ENCODE measurements at regions of chr2 and their contacts with region 1.

Region 1: DNA sequence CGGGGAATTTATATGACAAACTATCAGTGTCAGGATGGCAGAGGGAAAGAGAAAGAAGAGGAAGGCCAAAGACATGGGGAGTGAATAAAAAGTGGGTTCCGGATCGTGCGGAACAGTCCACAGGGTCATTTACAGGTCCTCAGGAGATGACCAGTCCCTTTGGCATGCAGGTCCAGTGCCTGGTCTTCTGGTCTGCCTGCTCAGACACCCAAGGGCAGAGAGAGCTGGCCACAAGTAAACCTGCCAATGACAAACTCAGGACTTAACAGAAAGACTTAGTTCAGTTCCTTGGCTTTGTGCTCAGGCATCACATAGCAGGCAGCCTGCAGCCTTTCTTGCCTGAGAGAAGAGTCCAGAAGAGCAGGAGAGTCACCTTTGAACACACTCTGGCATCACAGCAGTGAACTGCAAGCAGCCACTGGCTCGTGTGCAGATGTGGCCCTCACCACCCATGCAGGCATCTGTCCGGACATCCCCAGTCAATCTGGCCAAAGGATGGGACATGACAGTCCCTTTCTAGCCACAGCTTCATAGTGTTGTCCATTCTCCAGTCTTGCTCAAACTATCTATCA is 14.0 kb downstream of the TMEM127 start:
- DNase-seq: peak; percentile 95 to 99 (median 98)
- H3K4me3 ChIP-seq: peak overlapping the region in 1 of 4 donors; percentile 35
- H3K27ac ChIP-seq: peak overlapping the region; percentile 55 to 95 (median 76)
- H3K4me1 ChIP-seq: peaks cover 27 to 65% of the 10 kb centered on the region in 2 donors
- H3K27me3 ChIP-seq: no peaks in the 10 kb centered on the region
- CTCF ChIP-seq: peak in 1 of 6 experiments; percentile 37
- POLR2A ChIP-seq: peak; percentile 73 to 87

Region 2: GRCh38 chr2:96072746-96073145 is 179.1 kb before region 1 on chr2:
- intact Hi-C with region 1: no loop called
- DNase-seq: no peak
- H3K4me3 ChIP-seq: no peak overlapping the region
- H3K27ac ChIP-seq: no peak overlapping the region
- H3K4me1 ChIP-seq: no peaks in the 10 kb centered on the region
- H3K27me3 ChIP-seq: no peaks in the 10 kb centered on the region
- CTCF ChIP-seq: no peak
- POLR2A ChIP-seq: no peak

Region 3: DNA sequence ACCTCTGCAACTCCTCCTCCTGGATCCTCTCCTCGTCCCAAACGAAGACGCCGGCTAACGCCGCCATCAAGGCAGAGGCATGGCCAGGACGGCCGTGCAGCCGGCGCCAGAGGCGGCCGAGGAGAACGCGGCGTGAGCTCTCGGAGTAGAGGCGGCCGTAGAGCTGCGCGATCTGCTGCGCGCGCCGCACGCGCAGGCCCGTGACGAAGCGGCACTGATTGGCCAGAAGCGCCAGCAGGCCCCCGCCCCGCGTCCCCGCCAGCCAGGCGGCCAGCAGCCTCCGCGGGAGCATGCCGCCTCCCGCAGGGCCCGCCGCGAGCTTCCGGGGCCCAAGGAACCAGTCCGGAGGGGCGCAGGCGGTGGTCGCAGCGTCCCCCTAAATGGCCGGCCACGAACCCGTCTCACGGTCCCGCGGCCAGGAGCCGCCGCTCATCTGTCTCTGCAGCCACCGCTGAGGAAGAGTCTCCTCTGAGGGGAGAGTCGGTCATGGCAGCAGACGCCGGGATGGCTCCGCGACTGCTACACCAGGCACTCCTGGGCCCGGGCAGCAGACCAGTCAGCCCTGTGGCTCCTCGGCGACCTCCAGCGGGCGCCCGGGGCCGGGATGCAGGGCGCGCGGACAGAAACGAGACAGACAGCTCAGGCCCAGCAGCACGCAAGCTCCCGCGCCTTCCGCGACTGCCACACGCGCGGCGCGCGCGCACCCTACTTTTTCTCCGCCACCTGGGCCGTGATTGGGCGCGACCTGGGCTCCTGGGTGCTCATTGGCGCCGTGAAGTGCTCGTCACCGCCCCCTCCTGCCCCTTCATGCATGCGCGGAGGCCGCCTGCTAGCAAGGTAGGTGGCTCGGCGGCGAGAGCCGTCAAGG is 43.4 kb before region 1 on chr2 and contains the start of gene STARD7:
- intact Hi-C with region 1: loop called (anchors 5 to 10 kb)
- DNase-seq: peak; percentile 99 to 100 (median 99)
- H3K4me3 ChIP-seq: peak within 1 kb of the TSS; percentile 35 to 78 (median 70)
- H3K27ac ChIP-seq: peak within 1 kb of the TSS; percentile 89 to 97 (median 97)
- H3K4me1 ChIP-seq: peaks cover 40 to 51% of the 10 kb centered on the region in 2 donors
- H3K27me3 ChIP-seq: no peaks in the 10 kb centered on the region
- CTCF ChIP-seq: peak in 3 of 6 experiments; percentile 11 to 16 (median 13)
- POLR2A ChIP-seq: peak; percentile 90 to 97
- total RNA-seq, gene STARD7: 135 to 209 (median 166) TPM

Region 4: DNA sequence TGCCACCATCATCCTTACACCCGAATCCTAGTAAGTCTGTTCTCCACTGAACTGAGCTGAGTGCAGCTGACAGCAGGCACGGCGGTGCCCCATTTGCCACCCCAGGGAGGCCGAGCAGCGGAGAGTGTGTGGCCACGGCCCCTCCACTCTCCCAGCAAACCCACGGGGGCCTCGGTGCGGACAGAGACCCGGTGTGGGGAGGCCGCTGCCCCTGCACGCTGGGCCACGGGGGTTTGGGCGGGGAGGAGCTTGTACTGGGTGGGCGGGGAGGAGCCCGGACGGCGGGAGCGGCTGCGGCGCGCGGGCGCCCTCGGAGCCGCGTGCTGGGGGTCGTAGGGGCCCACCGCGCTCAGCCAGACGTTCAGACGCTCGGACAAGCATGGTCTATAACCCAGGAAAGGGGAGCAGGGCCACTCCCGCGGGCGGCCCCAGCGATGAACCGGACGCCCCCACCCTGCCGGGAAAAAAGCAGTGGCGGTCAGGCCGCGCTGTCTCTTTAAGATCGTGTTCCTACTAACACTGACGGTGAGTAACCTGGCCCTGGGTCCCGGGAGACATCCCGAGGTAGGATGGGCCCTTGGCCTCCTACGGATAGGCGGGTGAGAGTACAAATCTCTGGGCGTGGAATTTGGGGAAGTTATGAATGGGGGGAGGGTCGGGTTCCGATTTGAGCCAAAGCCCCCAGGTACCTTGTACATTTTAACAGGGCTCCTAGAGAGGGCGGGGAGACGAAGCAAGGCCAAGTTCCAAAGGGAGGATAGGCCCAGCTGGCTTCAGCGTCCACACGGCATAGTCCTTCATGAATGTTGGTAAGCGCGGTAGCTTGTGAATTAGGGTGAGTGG is 73.5 kb after region 1 on chr2 and contains the start of gene ITPRIPL1:
- intact Hi-C with region 1: no loop called
- DNase-seq: peak in 1 of 7 donors; percentile 19
- H3K4me3 ChIP-seq: peak within 1 kb of the TSS in 2 of 4 donors; percentile 18 to 43
- H3K27ac ChIP-seq: no peak within 1 kb of the TSS
- H3K4me1 ChIP-seq: peaks cover 10 to 22% of the 10 kb centered on the region in 2 donors
- H3K27me3 ChIP-seq: peaks cover 13% of the 10 kb centered on the region
- CTCF ChIP-seq: no peak
- POLR2A ChIP-seq: no peak
- total RNA-seq, gene ITPRIPL1: 0.32 to 3.8 (median 1.0) TPM in 8 of 9 donors, not detected in the other

Region 5: GRCh38 chr2:96336104-96336775 is 84.4 kb after region 1 on chr2:
- intact Hi-C with region 1: no loop called
- DNase-seq: no peak
- H3K4me3 ChIP-seq: peak overlapping the region in 1 of 4 donors; percentile 60
- H3K27ac ChIP-seq: peak overlapping the region in 1 of 5 donors; percentile 82
- H3K4me1 ChIP-seq: peaks cover 6 to 8% of the 10 kb centered on the region in 2 donors
- H3K27me3 ChIP-seq: no peaks in the 10 kb centered on the region
- CTCF ChIP-seq: no peak
- POLR2A ChIP-seq: no peak

Region 6: DNA sequence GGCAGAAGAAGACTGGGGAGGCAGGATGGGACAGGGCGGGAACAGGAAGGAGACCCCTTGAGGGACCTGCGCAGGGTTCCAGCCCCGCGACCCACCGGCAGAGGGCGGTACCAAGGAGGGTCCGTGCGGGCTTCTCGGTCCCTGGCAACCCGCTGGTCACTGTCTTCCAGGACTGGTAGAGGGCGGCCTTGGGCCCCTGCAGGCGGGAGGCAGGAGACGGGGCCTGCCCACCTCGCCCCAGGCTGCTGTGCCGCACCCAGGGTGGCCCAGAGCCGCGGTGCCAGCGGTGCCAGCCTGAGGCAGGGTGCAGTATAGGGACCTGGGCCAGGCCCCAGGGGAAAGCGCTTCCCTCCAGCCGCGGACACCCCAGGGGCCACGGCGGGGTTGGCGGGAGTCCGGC is 218.8 kb after region 1 on chr2:
- intact Hi-C with region 1: no loop called
- DNase-seq: peak; percentile 42 to 64 (median 57)
- H3K4me3 ChIP-seq: peak overlapping the region in 1 of 4 donors; percentile 46
- H3K27ac ChIP-seq: no peak overlapping the region
- H3K4me1 ChIP-seq: peaks cover 0 to 8% of the 10 kb centered on the region in 2 donors
- H3K27me3 ChIP-seq: no peaks in the 10 kb centered on the region
- CTCF ChIP-seq: peak; percentile 24 to 58 (median 51)
- POLR2A ChIP-seq: no peak

Measured in adrenal gland (tissue), 19 donors.